Stomach (tissue), 19 donors: ENCODE measurements at regions of chr6 and their contacts with region 1.

Region 1: GRCh38 chr6:18122124-18123093 is at the start of gene NHLRC1:
- DNase-seq: peak; percentile 91 to 97
- H3K4me3 ChIP-seq: peak within 1 kb of the TSS; percentile 44 to 63 (median 52)
- H3K27ac ChIP-seq: peak within 1 kb of the TSS in 4 of 5 donors; percentile 20 to 76 (median 40)
- H3K4me1 ChIP-seq: peaks cover 4 to 16% (median 10%) of the 10 kb centered on the region in 4 donors
- H3K27me3 ChIP-seq: no peaks in the 10 kb centered on the region
- CTCF ChIP-seq: peak in 6 of 7 experiments; percentile 34 to 95 (median 90)
- EP300 ChIP-seq: no peak
- POLR2A ChIP-seq: no peak
- total RNA-seq, gene NHLRC1: 1.1 to 1.8 TPM in 2 of 5 donors, not detected in the others

Region 2: GRCh38 chr6:17599885-17600526 is 522.4 kb before region 1 on chr6 and contains the start of gene FAM8A1:
- intact Hi-C with region 1: no loop called
- DNase-seq: peak; percentile 96 to 98
- H3K4me3 ChIP-seq: peak within 1 kb of the TSS; percentile 79 to 97 (median 89)
- H3K27ac ChIP-seq: peak within 1 kb of the TSS; percentile 93 to 100 (median 97)
- H3K4me1 ChIP-seq: peaks cover 12 to 44% (median 33%) of the 10 kb centered on the region in 4 donors
- H3K27me3 ChIP-seq: no peaks in the 10 kb centered on the region
- CTCF ChIP-seq: peak in 5 of 7 experiments; percentile 41 to 65 (median 58)
- EP300 ChIP-seq: no peak
- POLR2A ChIP-seq: peak in 1 of 4 donors; percentile 24
- total RNA-seq, gene FAM8A1: 17.0 to 42.4 (median 29.2) TPM

Region 3: GRCh38 chr6:17820055-17820454 is 302.4 kb before region 1 on chr6:
- intact Hi-C with region 1: loop called (anchors 10 kb)
- DNase-seq: peak in 1 of 2 donors; percentile 21
- H3K4me3 ChIP-seq: no peak overlapping the region
- H3K27ac ChIP-seq: no peak overlapping the region
- H3K4me1 ChIP-seq: no peaks in the 10 kb centered on the region
- H3K27me3 ChIP-seq: no peaks in the 10 kb centered on the region
- CTCF ChIP-seq: no peak
- EP300 ChIP-seq: no peak
- POLR2A ChIP-seq: no peak

Region 4: GRCh38 chr6:18269253-18269652 is 146.8 kb after region 1 on chr6:
- intact Hi-C with region 1: no loop called
- DNase-seq: peak in 1 of 2 donors; percentile 20
- H3K4me3 ChIP-seq: no peak overlapping the region
- H3K27ac ChIP-seq: no peak overlapping the region
- H3K4me1 ChIP-seq: peaks cover 0 to 13% (median 2%) of the 10 kb centered on the region in 4 donors
- H3K27me3 ChIP-seq: peaks cover 0 to 6% (median 3%) of the 10 kb centered on the region in 3 donors
- CTCF ChIP-seq: no peak
- EP300 ChIP-seq: no peak
- POLR2A ChIP-seq: no peak